ENCODE measurements at regions of chr4 and their contacts with region 1.

Region 1: GRCh38 chr4:86934771-86935565 is at the start of gene AFF1:
- DNase-seq: peak; percentile 96 to 98
- ATAC-seq: peak; percentile 96
- H3K4me3 ChIP-seq: peak within 1 kb of the TSS; percentile 59 to 99
- H3K27ac ChIP-seq: peak within 1 kb of the TSS; percentile 46 to 94
- H3K4me1 ChIP-seq: peaks cover 2 to 3% of the 10 kb centered on the region in 2 donors
- H3K27me3 ChIP-seq: no peaks in the 10 kb centered on the region
- total RNA-seq, gene AFF1: 99.6 to 107 TPM

Region 2: GRCh38 chr4:87093443-87094123 is 158.6 kb after region 1 on chr4:
- intact Hi-C with region 1: loop called in 1 of 2 experiments (anchors 5 kb)
- DNase-seq: no peak
- ATAC-seq: peak; percentile 77
- H3K4me3 ChIP-seq: no peak overlapping the region
- H3K27ac ChIP-seq: no peak overlapping the region
- H3K4me1 ChIP-seq: peaks cover 0 to 2% of the 10 kb centered on the region in 2 donors
- H3K27me3 ChIP-seq: no peaks in the 10 kb centered on the region

Region 3: GRCh38 chr4:87108142-87108546 is 173.2 kb after region 1 on chr4:
- intact Hi-C with region 1: loop called in 1 of 2 experiments (anchors 5 kb)
- DNase-seq: peak in 1 of 2 donors; percentile 65
- ATAC-seq: peak; percentile 90
- H3K4me3 ChIP-seq: no peak overlapping the region
- H3K27ac ChIP-seq: peak overlapping the region; percentile 34 to 96
- H3K4me1 ChIP-seq: peaks cover 0 to 6% of the 10 kb centered on the region in 2 donors
- H3K27me3 ChIP-seq: no peaks in the 10 kb centered on the region

Region 4: DNA sequence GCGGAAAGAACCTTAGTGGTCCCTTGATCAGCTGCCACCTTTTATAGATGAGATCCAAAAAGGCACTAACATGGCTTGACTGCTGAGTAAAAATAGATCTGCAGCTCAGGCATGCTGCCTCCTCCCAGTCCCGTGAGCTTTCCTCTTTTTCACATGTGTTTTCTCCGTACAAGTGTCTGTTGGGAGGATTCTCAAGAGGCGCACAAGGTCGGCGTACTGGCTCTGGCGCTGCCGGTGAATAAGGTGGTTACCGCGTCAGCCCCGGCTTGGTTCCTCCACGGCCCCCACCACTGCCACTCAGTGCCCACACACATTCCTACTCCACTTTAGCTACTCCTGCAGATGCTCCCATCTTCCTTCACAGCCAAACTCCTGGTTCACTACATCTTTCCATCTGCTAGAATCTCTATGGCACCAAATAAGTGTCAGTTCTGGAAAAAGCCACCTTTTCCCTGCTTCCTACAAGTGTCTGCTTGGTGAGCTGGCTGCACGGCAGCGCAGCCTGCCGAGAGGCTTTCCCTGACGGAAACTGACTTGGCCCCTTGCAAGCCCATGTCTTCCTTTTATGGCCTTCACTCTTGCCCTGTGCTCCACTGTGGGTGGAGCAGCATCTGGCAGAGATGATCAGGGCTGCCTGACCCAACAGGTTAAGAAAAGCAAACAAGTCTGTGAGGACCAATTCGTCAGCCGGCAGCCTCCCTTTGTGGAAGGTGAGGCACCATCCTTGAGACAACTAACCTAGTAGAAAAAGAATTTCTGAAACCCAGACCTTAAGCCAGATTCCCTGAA is 185.6 kb after region 1 on chr4:
- intact Hi-C with region 1: loop called in 1 of 2 experiments (anchors 10 kb)
- DNase-seq: peak; percentile 67 to 80
- ATAC-seq: peak; percentile 84
- H3K4me3 ChIP-seq: peak overlapping the region; percentile 11 to 26
- H3K27ac ChIP-seq: peak overlapping the region; percentile 80 to 88
- H3K4me1 ChIP-seq: no peaks in the 10 kb centered on the region
- H3K27me3 ChIP-seq: no peaks in the 10 kb centered on the region